Heart right ventricle (tissue), 16 donors: ENCODE measurements at regions of chr13 and their contacts with region 1.

Region 1: DNA sequence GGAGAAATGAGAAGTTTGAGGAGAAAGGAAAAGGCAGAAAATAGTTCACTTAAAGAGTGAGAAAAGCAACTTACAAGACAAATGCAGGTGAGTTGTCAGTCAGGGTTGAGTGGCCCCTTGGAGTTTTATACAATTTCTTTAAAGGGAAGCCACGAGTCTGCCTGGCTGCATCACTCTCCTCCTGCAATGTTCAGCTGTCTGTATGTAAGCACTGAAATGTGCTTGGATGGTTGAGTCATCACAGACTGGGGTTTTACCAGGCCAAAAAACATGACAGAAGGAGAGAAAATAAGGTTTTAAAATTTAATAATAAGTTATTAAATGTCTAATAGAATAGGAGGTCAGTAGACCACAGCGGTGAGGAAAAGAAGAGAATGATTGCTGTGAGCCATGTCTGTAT is 51.0 kb upstream of the FGF14 start:
- DNase-seq: no peak
- ATAC-seq: no peak
- H3K4me3 ChIP-seq: no peak overlapping the region
- H3K27ac ChIP-seq: no peak overlapping the region
- H3K4me1 ChIP-seq: no peaks in the 10 kb centered on the region
- H3K27me3 ChIP-seq: no peaks in the 10 kb centered on the region
- CTCF ChIP-seq: no peak

Region 2: GRCh38 chr13:101785858-101786257 is 667.0 kb before region 1 on chr13:
- intact Hi-C with region 1: loop called in 1 of 10 experiments (anchors 10 kb)
- DNase-seq: peak; percentile 14 to 21
- ATAC-seq: peak; percentile 42 to 92 (median 81)
- H3K4me3 ChIP-seq: no peak overlapping the region
- H3K27ac ChIP-seq: no peak overlapping the region
- H3K4me1 ChIP-seq: no peaks in the 10 kb centered on the region
- H3K27me3 ChIP-seq: no peaks in the 10 kb centered on the region
- CTCF ChIP-seq: peak in 8 of 9 donors; percentile 19 to 62 (median 48)

Region 3: GRCh38 chr13:102131246-102131645 is 321.6 kb before region 1 on chr13:
- intact Hi-C with region 1: loop called in 1 of 10 experiments (anchors 10 kb)
- DNase-seq: no peak
- ATAC-seq: no peak
- H3K4me3 ChIP-seq: no peak overlapping the region
- H3K27ac ChIP-seq: no peak overlapping the region
- H3K4me1 ChIP-seq: no peaks in the 10 kb centered on the region
- H3K27me3 ChIP-seq: no peaks in the 10 kb centered on the region
- CTCF ChIP-seq: no peak

Region 4: DNA sequence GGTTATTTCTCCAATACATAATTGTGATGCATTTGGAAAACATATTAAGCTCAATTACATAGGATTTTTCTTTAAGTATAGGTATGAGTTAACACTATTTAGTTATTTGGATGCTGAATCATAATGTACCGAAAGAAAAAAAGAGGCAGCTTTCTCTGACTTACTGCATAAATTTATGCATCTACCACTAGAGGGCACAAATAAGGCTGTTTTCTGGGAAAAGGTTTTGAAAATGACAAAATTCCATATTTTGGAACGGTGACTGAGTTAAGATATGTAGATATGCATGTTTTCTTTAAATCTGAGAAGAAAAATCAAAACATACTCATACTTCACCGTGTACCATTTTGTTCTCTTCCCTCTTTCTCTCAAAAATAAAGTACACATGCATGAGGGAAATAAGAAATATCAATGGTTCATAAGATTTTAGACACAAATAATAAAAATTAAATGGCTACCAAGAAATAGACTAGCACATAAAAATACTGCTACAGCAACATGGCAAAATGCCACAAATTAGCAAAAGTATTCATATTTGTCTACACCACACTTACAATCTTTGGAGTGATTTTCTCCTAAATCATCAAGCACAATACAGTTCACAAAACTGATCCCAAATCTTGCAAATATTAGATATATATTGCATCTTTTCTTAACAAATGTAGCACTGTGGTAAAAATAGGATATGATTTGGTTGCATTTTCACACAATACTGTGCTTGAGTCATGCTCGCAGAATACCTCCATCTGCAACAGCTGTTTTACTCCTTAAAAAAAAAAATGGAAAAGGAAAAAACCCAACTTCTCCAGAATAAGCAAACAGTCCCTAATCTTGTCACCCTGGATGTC is 311.0 kb before region 1 on chr13:
- intact Hi-C with region 1: loop called in 6 of 10 experiments (anchors 5 to 10 kb)
- DNase-seq: no peak
- ATAC-seq: peak in 3 of 8 donors; percentile 28 to 52 (median 38)
- H3K4me3 ChIP-seq: no peak overlapping the region
- H3K27ac ChIP-seq: peak overlapping the region in 2 of 10 donors; percentile 4 to 9
- H3K4me1 ChIP-seq: peaks cover 0 to 18% (median 0%) of the 10 kb centered on the region in 9 donors
- H3K27me3 ChIP-seq: no peaks in the 10 kb centered on the region
- CTCF ChIP-seq: peak; percentile 45 to 78 (median 65)

Region 5: GRCh38 chr13:102197193-102197592 is 255.6 kb before region 1 on chr13:
- intact Hi-C with region 1: loop called in 4 of 10 experiments (anchors 5 to 10 kb)
- DNase-seq: no peak
- ATAC-seq: peak in 1 of 8 donors; percentile 45
- H3K4me3 ChIP-seq: no peak overlapping the region
- H3K27ac ChIP-seq: no peak overlapping the region
- H3K4me1 ChIP-seq: peaks cover 0 to 5% (median 0%) of the 10 kb centered on the region in 9 donors
- H3K27me3 ChIP-seq: no peaks in the 10 kb centered on the region
- CTCF ChIP-seq: peak in 7 of 9 donors; percentile 22 to 49 (median 36)

Region 6: DNA sequence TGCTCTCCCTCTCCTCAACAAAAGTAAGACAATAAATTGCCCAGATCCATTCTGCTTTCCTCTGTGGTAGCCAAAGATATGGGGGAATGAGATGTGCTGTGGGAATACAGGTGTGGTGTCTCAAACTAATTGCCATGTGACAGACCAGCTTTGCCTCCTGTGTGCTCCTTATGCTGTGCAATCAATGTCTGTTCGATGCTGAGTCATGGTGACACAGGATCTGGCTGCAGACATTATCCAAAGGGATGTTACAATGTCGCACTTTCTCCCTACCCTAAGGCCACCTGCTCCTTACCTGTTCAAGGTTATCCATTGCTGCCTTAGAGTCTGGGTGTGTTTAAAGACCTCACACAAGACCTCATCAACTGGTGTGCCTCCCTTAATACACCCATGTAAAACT is 83.5 kb before region 1 on chr13:
- intact Hi-C with region 1: no loop called
- DNase-seq: no peak
- ATAC-seq: no peak
- H3K4me3 ChIP-seq: no peak overlapping the region
- H3K27ac ChIP-seq: no peak overlapping the region
- H3K4me1 ChIP-seq: no peaks in the 10 kb centered on the region
- H3K27me3 ChIP-seq: no peaks in the 10 kb centered on the region
- CTCF ChIP-seq: no peak

Region 7: DNA sequence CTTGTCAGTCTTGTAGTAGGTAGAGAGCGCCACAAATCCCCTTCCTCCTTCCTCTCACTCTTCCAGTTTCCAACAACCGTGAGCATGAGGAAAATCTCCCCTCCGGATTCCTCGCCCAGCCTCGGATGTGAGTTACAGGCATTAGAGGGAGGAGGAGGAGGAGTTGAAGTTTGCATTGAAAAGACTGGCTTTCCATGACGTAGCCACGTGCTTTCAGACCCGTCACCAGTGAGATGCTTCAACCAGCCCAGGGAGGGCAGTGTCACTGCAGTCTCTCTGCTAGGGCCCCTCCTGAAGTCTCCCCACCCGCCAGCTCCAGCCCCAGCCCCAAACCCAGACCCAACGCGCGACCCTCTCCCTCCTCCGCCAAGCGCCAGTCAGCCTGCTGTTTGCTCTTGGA is 50.5 kb before region 1 on chr13:
- intact Hi-C with region 1: loop called in 1 of 10 experiments (anchors 10 kb)
- DNase-seq: peak; percentile 11 to 42
- ATAC-seq: peak; percentile 53 to 80 (median 60)
- H3K4me3 ChIP-seq: peak overlapping the region; percentile 7 to 67 (median 61)
- H3K27ac ChIP-seq: peak overlapping the region in 3 of 10 donors; percentile 1 to 52 (median 37)
- H3K4me1 ChIP-seq: peaks cover 0 to 23% (median 5%) of the 10 kb centered on the region in 9 donors
- H3K27me3 ChIP-seq: peaks cover 0 to 57% (median 25%) of the 10 kb centered on the region in 7 donors
- CTCF ChIP-seq: peak in 3 of 9 donors; percentile 27 to 38 (median 37)

Region 8: GRCh38 chr13:102693781-102694180 is 240.9 kb after region 1 on chr13:
- intact Hi-C with region 1: no loop called
- DNase-seq: no peak
- ATAC-seq: no peak
- H3K4me3 ChIP-seq: no peak overlapping the region
- H3K27ac ChIP-seq: no peak overlapping the region
- H3K4me1 ChIP-seq: no peaks in the 10 kb centered on the region
- H3K27me3 ChIP-seq: peaks cover 0 to 25% (median 3%) of the 10 kb centered on the region in 7 donors
- CTCF ChIP-seq: no peak

Region 9: DNA sequence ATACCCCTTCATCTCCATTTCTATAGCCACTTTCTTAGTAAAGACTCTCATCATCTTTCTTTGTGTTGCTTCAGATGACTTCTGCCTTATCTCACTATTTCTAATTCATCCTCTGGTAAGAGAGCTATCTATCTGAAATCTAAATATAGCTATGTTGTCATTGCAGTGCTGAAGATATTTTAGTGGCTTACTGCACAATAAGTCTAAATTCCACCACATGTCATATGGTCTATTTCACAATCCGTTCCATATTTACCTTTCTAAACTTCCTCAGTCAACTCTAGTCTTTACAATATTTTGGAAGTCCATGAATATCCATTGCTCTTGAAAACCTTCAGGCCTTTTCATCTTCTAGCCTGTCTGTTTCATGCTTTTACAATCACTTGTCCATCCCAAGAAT is 1078.4 kb after region 1 on chr13:
- intact Hi-C with region 1: no loop called
- DNase-seq: no peak
- ATAC-seq: no peak
- H3K4me3 ChIP-seq: no peak overlapping the region
- H3K27ac ChIP-seq: no peak overlapping the region
- H3K4me1 ChIP-seq: peaks cover 0 to 6% (median 0%) of the 10 kb centered on the region in 9 donors
- H3K27me3 ChIP-seq: no peaks in the 10 kb centered on the region
- CTCF ChIP-seq: no peak